MCF 10A (cell line): ENCODE measurements at regions of chr11 and their contacts with region 1.

Region 1: GRCh38 chr11:119121008-119121810 is at the start of gene HINFP:
- DNase-seq: peak; percentile 99
- H3K4me3 Mint-ChIP-seq: peak within 1 kb of the TSS; percentile 79
- H3K27ac Mint-ChIP-seq: peak within 1 kb of the TSS; percentile 85
- H3K4me1 Mint-ChIP-seq: peaks cover 25% of the 10 kb centered on the region
- H3K27me3 Mint-ChIP-seq: no peaks in the 10 kb centered on the region
- CTCF ChIP-seq: no peak
- total RNA-seq, gene HINFP: 23.4 and 26.2 TPM in 2 replicates

Region 2: DNA sequence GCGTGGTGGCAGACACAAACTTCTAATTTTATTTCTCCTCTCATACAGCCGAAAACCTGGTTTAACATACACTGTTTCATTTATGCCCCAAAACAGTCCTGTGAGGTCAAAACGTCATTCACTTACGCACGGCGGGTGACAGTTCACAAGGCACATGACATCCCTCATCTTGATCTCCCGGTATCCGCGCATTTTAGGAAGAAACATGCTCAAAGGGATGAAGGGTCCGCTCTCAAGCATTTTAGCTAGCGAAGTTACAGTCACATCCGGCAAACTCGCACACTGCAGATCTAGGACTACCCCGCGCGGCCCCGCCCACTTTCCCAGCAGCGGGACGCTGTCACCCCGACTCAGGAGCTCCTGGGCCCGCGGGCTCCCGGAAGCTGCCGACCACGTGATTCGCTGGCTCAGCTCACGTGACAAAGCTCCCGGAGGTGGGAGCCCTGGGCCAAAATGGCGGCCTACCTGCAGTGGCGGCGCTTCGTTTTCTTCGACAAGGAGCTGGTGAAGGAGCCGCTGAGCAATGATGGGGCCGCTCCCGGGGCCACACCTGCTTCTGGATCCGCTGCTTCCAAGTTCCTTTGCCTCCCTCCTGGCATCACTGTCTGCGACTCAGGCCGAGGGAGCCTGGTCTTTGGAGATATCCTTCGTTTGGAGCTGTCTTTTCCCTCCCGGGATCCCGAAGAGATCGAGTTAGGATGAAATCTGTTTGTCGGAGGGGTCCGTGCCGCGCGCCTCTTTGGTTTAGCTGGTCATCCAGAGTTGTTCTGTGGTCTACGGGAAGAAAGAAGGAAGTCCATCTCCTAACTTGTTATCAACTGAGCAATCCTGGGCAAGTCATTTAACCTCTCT is 53.6 kb before region 1 on chr11 and contains the start of gene VPS11:
- CTCF ChIA-PET with region 1: interaction called, 5 read pairs
- POLR2A ChIA-PET with region 1: interaction called, 11 read pairs
- intact Hi-C with region 1: no loop called
- DNase-seq: peak; percentile 95
- H3K4me3 Mint-ChIP-seq: peak within 1 kb of the TSS; percentile 87
- H3K27ac Mint-ChIP-seq: peak within 1 kb of the TSS; percentile 76
- H3K4me1 Mint-ChIP-seq: peaks cover 7% of the 10 kb centered on the region
- H3K27me3 Mint-ChIP-seq: no peaks in the 10 kb centered on the region
- CTCF ChIP-seq: no peak
- total RNA-seq, gene VPS11: 16.2 and 21.8 TPM in 2 replicates

Region 3: DNA sequence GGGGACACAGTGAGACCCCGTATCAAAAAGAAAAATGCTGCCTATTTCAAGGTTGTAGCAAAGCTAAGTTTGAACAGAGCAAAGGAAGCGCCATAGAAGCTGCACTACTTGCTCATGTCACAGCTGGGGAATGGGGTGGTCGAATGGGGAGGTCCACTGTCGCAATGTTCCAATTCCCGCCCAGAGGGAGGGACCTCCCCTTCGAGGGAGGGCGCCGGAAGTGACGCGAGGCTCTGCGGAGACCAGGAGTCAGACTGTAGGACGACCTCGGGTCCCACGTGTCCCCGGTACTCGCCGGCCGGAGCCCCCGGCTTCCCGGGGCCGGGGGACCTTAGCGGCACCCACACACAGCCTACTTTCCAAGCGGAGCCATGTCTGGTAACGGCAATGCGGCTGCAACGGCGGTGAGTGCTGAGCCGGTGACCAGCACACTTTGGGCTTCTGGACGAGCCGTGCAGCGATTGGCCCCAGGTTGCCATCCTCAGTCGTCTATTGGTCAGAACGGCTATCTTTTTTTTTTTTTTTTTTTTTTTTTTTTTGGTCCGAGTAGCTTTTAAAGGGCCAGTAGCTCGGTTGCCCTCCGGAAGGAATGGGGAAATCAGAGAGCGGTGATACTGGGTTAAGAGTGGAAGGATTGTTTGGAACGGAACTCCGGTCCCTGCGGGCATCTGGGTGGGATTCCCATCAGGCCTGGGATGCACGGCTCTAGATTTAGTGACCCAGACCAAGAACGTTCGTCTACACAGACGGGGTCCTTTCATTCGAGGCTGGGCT is 36.4 kb before region 1 on chr11 and contains the start of gene HMBS:
- CTCF ChIA-PET with region 1: no interaction called
- POLR2A ChIA-PET with region 1: interaction called, 10 read pairs
- intact Hi-C with region 1: no loop called
- DNase-seq: peak; percentile 93
- H3K4me3 Mint-ChIP-seq: peak within 1 kb of the TSS; percentile 94
- H3K27ac Mint-ChIP-seq: peak within 1 kb of the TSS; percentile 81
- H3K4me1 Mint-ChIP-seq: peaks cover 10% of the 10 kb centered on the region
- H3K27me3 Mint-ChIP-seq: no peaks in the 10 kb centered on the region
- CTCF ChIP-seq: no peak
- total RNA-seq, gene HMBS: 38.4 and 51.3 TPM in 2 replicates

Region 4: DNA sequence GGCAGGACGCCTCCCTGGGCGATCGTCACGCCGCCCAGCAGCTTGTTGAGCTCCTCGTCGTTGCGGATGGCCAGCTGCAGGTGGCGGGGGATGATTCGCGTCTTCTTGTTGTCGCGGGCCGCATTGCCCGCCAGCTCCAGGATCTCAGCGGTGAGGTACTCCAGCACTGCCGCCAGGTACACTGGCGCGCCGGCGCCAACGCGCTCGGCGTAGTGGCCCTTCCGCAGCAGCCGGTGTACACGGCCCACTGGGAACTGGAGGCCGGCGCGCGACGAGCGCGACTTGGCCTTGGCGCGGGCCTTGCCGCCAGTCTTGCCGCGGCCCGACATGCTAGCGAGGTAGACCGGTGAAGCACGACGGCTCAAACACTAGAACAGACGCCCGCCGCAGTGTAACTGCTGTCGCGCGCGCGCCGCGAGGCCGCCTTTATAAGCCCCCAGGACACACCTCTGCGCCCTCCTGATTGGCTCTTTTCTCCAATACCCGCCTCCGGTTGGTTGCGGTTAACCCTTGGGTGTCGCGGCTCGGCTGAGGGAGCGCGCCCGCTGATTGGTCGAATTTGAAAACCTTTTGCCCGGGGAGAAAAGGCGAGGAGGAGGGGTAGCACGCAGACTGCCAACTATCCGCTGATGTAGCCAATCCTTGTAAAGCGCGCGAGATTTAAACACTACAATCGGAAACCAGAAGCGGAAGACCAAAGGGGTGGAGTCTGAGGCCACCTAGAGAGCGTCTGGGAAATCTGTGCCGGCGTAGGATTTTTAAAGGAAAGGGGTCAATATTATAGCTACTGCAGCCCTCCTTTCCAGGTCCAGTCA is 25.9 kb before region 1 on chr11:
- CTCF ChIA-PET with region 1: no interaction called
- POLR2A ChIA-PET with region 1: interaction called, 29 read pairs
- intact Hi-C with region 1: loop called (anchors 2 kb)
- DNase-seq: peak; percentile 100
- H3K4me3 Mint-ChIP-seq: peak overlapping the region; percentile 89
- H3K27ac Mint-ChIP-seq: peak overlapping the region; percentile 89
- H3K4me1 Mint-ChIP-seq: peaks cover 26% of the 10 kb centered on the region
- H3K27me3 Mint-ChIP-seq: no peaks in the 10 kb centered on the region
- CTCF ChIP-seq: peak; percentile 1

Region 5: GRCh38 chr11:119108146-119108856 is 12.9 kb before region 1 on chr11:
- CTCF ChIA-PET with region 1: interaction called, 7 read pairs
- POLR2A ChIA-PET with region 1: interaction called, 149 read pairs
- intact Hi-C with region 1: loop called (anchors 1 kb)
- DNase-seq: peak; percentile 77
- H3K4me3 Mint-ChIP-seq: peak overlapping the region; percentile 76
- H3K27ac Mint-ChIP-seq: peak overlapping the region; percentile 57
- H3K4me1 Mint-ChIP-seq: peaks cover 13% of the 10 kb centered on the region
- H3K27me3 Mint-ChIP-seq: no peaks in the 10 kb centered on the region
- CTCF ChIP-seq: no peak

Region 6: GRCh38 chr11:119168471-119169281 is 47.5 kb after region 1 on chr11 and contains the start of gene NLRX1:
- CTCF ChIA-PET with region 1: interaction called, 5 read pairs
- POLR2A ChIA-PET with region 1: interaction called, 10 read pairs
- intact Hi-C with region 1: no loop called
- DNase-seq: peak; percentile 85
- H3K4me3 Mint-ChIP-seq: peak within 1 kb of the TSS; percentile 82
- H3K27ac Mint-ChIP-seq: peak within 1 kb of the TSS; percentile 54
- H3K4me1 Mint-ChIP-seq: peaks cover 15% of the 10 kb centered on the region
- H3K27me3 Mint-ChIP-seq: no peaks in the 10 kb centered on the region
- CTCF ChIP-seq: peak; percentile 86
- total RNA-seq, gene NLRX1: 16.7 and 18.9 TPM in 2 replicates